Breast epithelium (tissue), 4 donors: ENCODE measurements at regions of chr6 and their contacts with region 1.

Region 1: GRCh38 chr6:36633915-36634314 is 39.8 kb downstream of the SRSF3 start:
- DNase-seq: peak; percentile 35 to 80
- H3K4me3 ChIP-seq: no peak overlapping the region
- H3K27ac ChIP-seq: peak overlapping the region; percentile 33 to 34
- H3K4me1 ChIP-seq: peaks cover 0 to 7% of the 10 kb centered on the region in 2 donors
- H3K27me3 ChIP-seq: no peaks in the 10 kb centered on the region
- CTCF ChIP-seq: no peak
- POLR2A ChIP-seq: no peak

Region 2: DNA sequence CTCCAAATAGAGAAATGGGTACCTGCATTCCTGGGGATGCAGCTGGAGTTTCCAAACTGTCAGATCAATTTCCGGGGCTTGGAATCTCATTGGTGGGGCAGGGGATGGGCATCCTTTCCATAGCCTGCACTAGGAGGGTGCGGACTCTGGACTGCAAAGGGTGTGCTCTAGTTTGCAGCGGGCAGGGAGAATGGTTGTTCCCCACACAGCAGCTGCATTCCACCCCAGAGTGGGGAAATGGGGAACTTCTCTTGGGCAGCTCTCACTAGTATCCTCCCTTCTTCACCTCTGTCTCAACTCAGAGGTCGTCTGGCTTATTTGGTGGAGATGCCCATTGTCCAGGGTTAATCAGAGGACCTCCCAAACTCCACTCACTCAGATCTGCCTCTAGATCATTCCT is 10.1 kb after region 1 on chr6:
- intact Hi-C with region 1: no loop called
- DNase-seq: no peak
- H3K4me3 ChIP-seq: no peak overlapping the region
- H3K27ac ChIP-seq: no peak overlapping the region
- H3K4me1 ChIP-seq: peaks cover 0 to 6% of the 10 kb centered on the region in 2 donors
- H3K27me3 ChIP-seq: no peaks in the 10 kb centered on the region
- CTCF ChIP-seq: no peak
- POLR2A ChIP-seq: no peak

Region 3: GRCh38 chr6:36759148-36759759 is 125.3 kb after region 1 on chr6:
- intact Hi-C with region 1: loop called (anchors 10 kb)
- DNase-seq: peak; percentile 73 to 80
- H3K4me3 ChIP-seq: no peak overlapping the region
- H3K27ac ChIP-seq: no peak overlapping the region
- H3K4me1 ChIP-seq: no peaks in the 10 kb centered on the region
- H3K27me3 ChIP-seq: no peaks in the 10 kb centered on the region
- CTCF ChIP-seq: peak; percentile 88 to 93 (median 90)
- POLR2A ChIP-seq: no peak